ENCODE measurements at regions of chr12 and their contacts with region 1.

Region 1: GRCh38 chr12:91178139-91178561 is 4.5 kb downstream of the DCN start:
- DNase-seq: peak in 2 of 3 donors; percentile 38 to 51
- ATAC-seq: peak; percentile 66 to 76
- H3K4me3 ChIP-seq: peak overlapping the region; percentile 86
- H3K27ac ChIP-seq: peak overlapping the region; percentile 65
- H3K4me1 ChIP-seq: peaks cover under 1% of the 10 kb centered on the region
- H3K27me3 ChIP-seq: no peaks in the 10 kb centered on the region

Region 2: DNA sequence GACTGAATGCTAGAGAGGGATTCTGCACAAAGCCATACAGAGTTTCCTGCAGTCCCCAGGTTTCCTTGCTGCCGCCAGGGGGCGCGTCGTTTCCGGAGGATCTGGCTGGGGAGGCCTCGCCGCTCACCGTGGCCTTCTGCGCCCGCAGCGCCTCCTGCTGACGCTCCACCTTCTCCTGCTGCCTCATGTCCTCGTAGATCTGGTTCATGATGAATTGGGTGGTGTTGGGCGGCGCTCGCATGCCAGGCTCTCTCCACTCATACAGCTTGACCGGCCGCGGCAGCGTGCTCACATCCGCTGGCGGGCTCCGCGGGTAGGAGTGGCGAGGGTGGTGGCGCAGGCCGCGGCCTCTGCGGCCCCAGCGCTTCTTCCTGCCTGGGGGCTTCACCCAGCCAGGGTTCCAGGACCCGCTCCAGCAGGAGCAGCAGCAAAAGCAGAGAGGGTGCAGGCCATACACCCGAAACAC is 224.2 kb before region 1 on chr12:
- intact Hi-C with region 1: no loop called
- DNase-seq: peak in 2 of 3 donors; percentile 47 to 64
- ATAC-seq: no peak
- H3K4me3 ChIP-seq: no peak overlapping the region
- H3K27ac ChIP-seq: no peak overlapping the region
- H3K4me1 ChIP-seq: no peaks in the 10 kb centered on the region
- H3K27me3 ChIP-seq: no peaks in the 10 kb centered on the region

Region 3: GRCh38 chr12:91249518-91250272 is 71.5 kb after region 1 on chr12:
- intact Hi-C with region 1: loop called in 1 of 4 experiments (anchors 10 kb)
- DNase-seq: no peak
- ATAC-seq: peak; percentile 52 to 83
- H3K4me3 ChIP-seq: no peak overlapping the region
- H3K27ac ChIP-seq: no peak overlapping the region
- H3K4me1 ChIP-seq: no peaks in the 10 kb centered on the region
- H3K27me3 ChIP-seq: no peaks in the 10 kb centered on the region

Region 4: DNA sequence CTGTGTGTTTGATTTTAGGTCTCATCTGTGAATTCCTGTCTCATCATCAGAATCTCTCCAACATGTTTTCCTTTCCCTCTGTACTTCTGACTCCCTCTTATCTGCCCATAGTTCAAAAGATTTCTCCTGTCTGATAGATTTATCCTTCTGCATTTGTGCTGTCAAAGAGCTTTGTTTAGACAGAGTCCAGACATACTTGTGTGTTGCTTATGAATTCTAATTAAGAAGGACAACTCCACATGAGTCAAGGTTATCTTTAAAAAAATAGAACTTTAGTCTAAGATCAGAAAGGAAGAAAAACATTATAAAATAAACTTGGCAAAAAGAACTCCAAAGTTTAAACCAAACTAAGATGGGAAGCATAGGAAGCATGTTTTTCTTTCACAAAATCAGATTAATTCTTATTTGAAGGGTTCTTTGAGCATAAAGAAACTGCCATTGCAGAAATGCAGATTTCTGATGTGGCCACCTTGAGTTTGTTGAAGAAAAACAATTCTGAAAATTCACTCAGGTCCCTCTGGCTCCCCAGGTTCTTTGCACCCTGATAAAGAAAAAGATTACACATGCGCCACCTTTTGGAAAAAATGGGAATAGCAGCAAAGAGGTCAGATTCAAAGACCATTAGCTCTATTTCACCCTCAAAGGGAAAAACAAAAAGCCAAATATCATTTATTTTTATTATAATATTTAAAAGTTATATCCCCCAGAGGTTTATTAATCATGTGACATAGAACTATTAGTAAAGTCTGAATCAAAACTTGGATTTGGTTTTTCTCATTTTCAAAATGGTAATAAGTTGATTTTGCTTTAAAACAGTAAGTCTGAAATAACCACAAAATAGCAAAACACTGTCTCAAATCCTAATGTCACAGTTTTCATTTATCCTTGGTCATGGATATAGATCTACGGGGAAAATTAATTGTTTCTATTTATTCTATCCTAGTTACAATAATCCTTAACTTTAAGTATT is 148.2 kb after region 1 on chr12:
- intact Hi-C with region 1: loop called in 3 of 4 experiments (anchors 5 to 10 kb)
- DNase-seq: no peak
- ATAC-seq: peak; percentile 41 to 59
- H3K4me3 ChIP-seq: no peak overlapping the region
- H3K27ac ChIP-seq: no peak overlapping the region
- H3K4me1 ChIP-seq: no peaks in the 10 kb centered on the region
- H3K27me3 ChIP-seq: no peaks in the 10 kb centered on the region